IMR-90 (cell line): ENCODE measurements at regions of chr13 and their contacts with region 1.

Region 1: GRCh38 chr13:33710924-33711323 is 107.0 kb upstream of the RFC3 start:
- DNase-seq: no peak
- ATAC-seq: no peak
- H3K4me3 ChIP-seq: no peak overlapping the region
- H3K27ac ChIP-seq: no peak overlapping the region
- H3K4me1 ChIP-seq: no peaks in the 10 kb centered on the region
- H3K27me3 ChIP-seq: no peaks in the 10 kb centered on the region; the same call in 1 of the 2 replicates
- CTCF ChIP-seq: no peak
- POLR2A ChIP-seq: no peak
- RAD21 ChIP-seq: no peak

Region 2: GRCh38 chr13:33560726-33561125 is 150.2 kb before region 1 on chr13:
- CTCF ChIA-PET with region 1: no interaction called
- POLR2A ChIA-PET with region 1: no interaction called
- dilution Hi-C with region 1: no loop called
- in situ Hi-C with region 1: loop called (anchors 10 kb)
- intact Hi-C with region 1: no loop called
- DNase-seq: no peak
- ATAC-seq: no peak
- H3K4me3 ChIP-seq: no peak overlapping the region
- H3K27ac ChIP-seq: no peak overlapping the region
- H3K4me1 ChIP-seq: no peaks in the 10 kb centered on the region
- H3K27me3 ChIP-seq: no peaks in the 10 kb centered on the region
- CTCF ChIP-seq: no peak
- POLR2A ChIP-seq: no peak
- RAD21 ChIP-seq: no peak

Region 3: DNA sequence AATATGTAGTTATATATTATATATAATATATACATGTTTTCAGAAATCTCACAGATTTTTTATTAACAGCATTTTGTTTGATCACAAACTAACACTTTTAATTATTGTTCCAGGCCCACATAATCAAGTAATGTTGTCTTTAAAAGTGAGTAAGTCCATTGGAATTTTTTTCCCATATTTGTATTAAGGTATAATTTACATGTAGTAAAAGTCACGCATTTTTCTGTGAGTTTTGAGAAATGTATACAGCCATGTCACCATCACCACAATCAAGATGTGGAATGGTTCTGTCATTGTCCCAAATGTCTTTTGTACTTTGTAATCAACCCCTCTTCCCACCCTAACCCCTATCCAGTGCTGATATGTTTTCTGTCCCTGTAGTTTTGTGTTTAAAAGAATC is 13.0 kb before region 1 on chr13:
- CTCF ChIA-PET with region 1: no interaction called
- POLR2A ChIA-PET with region 1: no interaction called
- dilution Hi-C with region 1: no loop called
- in situ Hi-C with region 1: no loop called
- intact Hi-C with region 1: loop called (anchors 1 kb)
- DNase-seq: no peak
- ATAC-seq: no peak
- H3K4me3 ChIP-seq: no peak overlapping the region
- H3K27ac ChIP-seq: no peak overlapping the region
- H3K4me1 ChIP-seq: no peaks in the 10 kb centered on the region
- H3K27me3 ChIP-seq: peaks cover 2% of the 10 kb centered on the region; the same call in 1 of the 2 replicates
- CTCF ChIP-seq: no peak
- POLR2A ChIP-seq: no peak
- RAD21 ChIP-seq: no peak